Caco-2 (cell line): ENCODE measurements at regions of chr2 and their contacts with region 1.

Region 1: GRCh38 chr2:219388127-219388844 is 574 bp upstream of the DNPEP start:
- DNase-seq: peak; percentile 98
- H3K4me3 ChIP-seq: peak overlapping the region; percentile 42
- H3K4me3 Mint-ChIP-seq: peak overlapping the region; percentile 96
- H3K27ac Mint-ChIP-seq: peak overlapping the region; percentile 94
- H3K4me1 ChIP-seq: peaks cover 15% of the 10 kb centered on the region
- H3K4me1 Mint-ChIP-seq: no peaks in the 10 kb centered on the region
- H3K27me3 ChIP-seq: no peaks in the 10 kb centered on the region
- H3K27me3 Mint-ChIP-seq: no peaks in the 10 kb centered on the region
- CTCF ChIP-seq: peak; percentile 32 to 60

Region 2: DNA sequence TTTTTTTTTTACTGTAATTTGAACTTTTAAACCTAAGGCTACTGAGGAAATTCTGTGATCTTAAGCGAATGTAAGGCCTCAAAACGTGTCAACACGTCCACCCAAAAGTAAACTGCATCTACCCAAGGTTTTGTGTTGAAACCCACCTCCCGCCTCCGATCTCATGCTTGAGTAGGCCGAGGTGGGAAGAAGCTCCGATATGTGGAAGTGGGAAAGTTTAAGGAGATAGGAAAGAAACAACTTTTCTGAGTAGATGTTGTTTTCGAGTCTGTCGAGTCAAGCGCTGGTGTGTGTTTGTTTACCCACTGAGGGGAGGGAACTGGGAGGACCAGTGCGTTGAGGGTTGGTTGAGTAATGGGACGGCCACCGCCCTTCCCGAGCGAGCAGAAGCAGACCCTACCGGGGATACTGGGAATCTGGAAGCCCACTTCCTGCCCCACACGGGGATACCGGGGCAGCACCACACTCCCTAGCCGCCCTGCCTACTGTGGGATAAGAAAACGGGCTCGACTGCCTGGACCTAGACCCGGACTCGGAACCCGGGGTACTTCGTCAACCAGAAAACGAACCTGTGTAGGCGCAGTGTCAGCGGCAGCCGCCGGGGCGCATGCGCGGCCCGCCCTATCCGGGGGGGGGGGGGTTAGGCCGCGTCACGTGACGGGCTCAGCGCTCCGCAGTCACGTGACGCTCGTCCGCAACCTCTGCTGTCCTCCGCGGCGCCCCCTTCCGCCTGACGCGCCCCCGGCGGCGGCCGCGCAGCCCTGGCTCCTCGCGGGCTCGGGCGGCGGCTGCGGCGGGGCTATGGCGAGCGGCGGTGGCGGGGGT is 210.5 kb before region 1 on chr2 and contains the start of gene RETREG2:
- CTCF ChIA-PET with region 1: interaction called, 3 read pairs
- POLR2A ChIA-PET with region 1: interaction called, 6 read pairs
- intact Hi-C with region 1: loop called (anchors 1 kb)
- DNase-seq: peak; percentile 89 to 90
- H3K4me3 ChIP-seq: peak within 1 kb of the TSS; percentile 93
- H3K4me3 Mint-ChIP-seq: peak within 1 kb of the TSS; percentile 90
- H3K27ac Mint-ChIP-seq: peak within 1 kb of the TSS; percentile 89
- H3K4me1 ChIP-seq: peaks cover 12% of the 10 kb centered on the region
- H3K4me1 Mint-ChIP-seq: peaks cover 18% of the 10 kb centered on the region
- H3K27me3 ChIP-seq: no peaks in the 10 kb centered on the region; the same call in 1 of the 2 replicates
- H3K27me3 Mint-ChIP-seq: no peaks in the 10 kb centered on the region
- CTCF ChIP-seq: peak; percentile 17 to 38
- total RNA-seq, gene RETREG2: 59.5 and 62.0 TPM in 2 replicates

Region 3: GRCh38 chr2:219368690-219369195 is 19.5 kb before region 1 on chr2:
- CTCF ChIA-PET with region 1: interaction called, 8 read pairs
- POLR2A ChIA-PET with region 1: interaction called, 4 read pairs
- intact Hi-C with region 1: loop called (anchors 1 kb)
- DNase-seq: peak; percentile 54 to 86
- H3K4me3 ChIP-seq: no peak overlapping the region
- H3K4me3 Mint-ChIP-seq: peak overlapping the region; percentile 14
- H3K27ac Mint-ChIP-seq: peak overlapping the region; percentile 25
- H3K4me1 ChIP-seq: peaks cover 21% of the 10 kb centered on the region
- H3K4me1 Mint-ChIP-seq: peaks cover 20% of the 10 kb centered on the region
- H3K27me3 ChIP-seq: no peaks in the 10 kb centered on the region
- H3K27me3 Mint-ChIP-seq: no peaks in the 10 kb centered on the region
- CTCF ChIP-seq: no peak

Region 4: GRCh38 chr2:219441451-219442255 is 53.4 kb after region 1 on chr2:
- CTCF ChIA-PET with region 1: interaction called, 8 read pairs
- POLR2A ChIA-PET with region 1: no interaction called
- intact Hi-C with region 1: loop called (anchors 5 kb)
- DNase-seq: peak; percentile 69 to 72
- H3K4me3 ChIP-seq: peak overlapping the region; percentile 55
- H3K4me3 Mint-ChIP-seq: peak overlapping the region; percentile 86
- H3K27ac Mint-ChIP-seq: peak overlapping the region; percentile 53
- H3K4me1 ChIP-seq: peaks cover 10% of the 10 kb centered on the region
- H3K4me1 Mint-ChIP-seq: no peaks in the 10 kb centered on the region
- H3K27me3 ChIP-seq: no peaks in the 10 kb centered on the region
- H3K27me3 Mint-ChIP-seq: no peaks in the 10 kb centered on the region
- CTCF ChIP-seq: no peak

Region 5: DNA sequence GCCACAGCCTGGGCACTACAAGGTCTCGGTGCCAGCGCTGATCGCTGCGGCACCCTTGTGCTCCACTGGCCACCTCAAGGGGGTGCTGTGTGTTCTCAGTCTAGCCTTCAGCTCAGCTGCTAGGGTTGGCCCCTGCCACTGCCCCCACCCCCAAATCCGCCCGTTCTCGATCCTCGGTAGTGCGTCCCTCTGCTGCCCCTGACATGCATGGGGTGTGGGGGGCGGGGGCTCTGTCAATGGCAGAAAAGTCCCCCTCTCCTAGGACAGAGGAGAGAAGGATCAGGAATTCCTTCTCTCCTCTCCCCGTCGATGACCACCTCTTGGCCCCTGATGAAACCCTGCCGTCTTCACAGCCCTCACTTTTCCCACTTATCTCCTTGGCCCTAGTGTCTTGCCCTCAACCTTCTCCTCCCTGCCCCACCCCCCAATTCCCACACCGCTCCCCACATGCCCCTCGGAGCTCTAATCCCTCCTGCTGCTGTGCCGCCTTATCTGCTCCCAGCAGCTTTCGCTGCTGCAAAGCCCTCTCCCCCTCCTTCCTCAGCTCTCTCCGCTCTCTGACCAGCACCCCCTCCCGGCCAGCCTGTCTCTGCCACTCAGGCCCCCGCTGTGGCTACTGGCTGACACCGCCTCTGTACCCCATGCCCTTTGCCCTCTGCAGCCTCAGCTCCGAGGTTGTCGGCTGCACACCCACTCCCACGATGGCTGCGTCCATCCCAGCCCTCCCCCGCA is 121.7 kb after region 1 on chr2:
- CTCF ChIA-PET with region 1: interaction called, 15 read pairs
- POLR2A ChIA-PET with region 1: no interaction called
- intact Hi-C with region 1: no loop called
- DNase-seq: peak; percentile 80 to 81
- H3K4me3 ChIP-seq: peak overlapping the region; percentile 64
- H3K4me3 Mint-ChIP-seq: peak overlapping the region; percentile 80
- H3K27ac Mint-ChIP-seq: no peak overlapping the region
- H3K4me1 ChIP-seq: peaks cover 12% of the 10 kb centered on the region
- H3K4me1 Mint-ChIP-seq: peaks cover 18% of the 10 kb centered on the region
- H3K27me3 ChIP-seq: peaks cover 5% of the 10 kb centered on the region; the same call in 1 of the 2 replicates
- H3K27me3 Mint-ChIP-seq: peaks cover 20% of the 10 kb centered on the region
- CTCF ChIP-seq: peak; percentile 68 to 90